Activated B cell treated with CpG ODN at 0.5 μM for 24 hours (primary cell): ENCODE measurements at regions of chrX and their contacts with region 1.

Region 1: GRCh38 chrX:81121513-81122382 is 80.0 kb downstream of the HMGN5 start:
- DNase-seq: peak; percentile 70
- ATAC-seq: peak; percentile 95
- H3K4me3 Mint-ChIP-seq: peak overlapping the region; percentile 93
- H3K27ac Mint-ChIP-seq: peak overlapping the region; percentile 82
- H3K4me1 Mint-ChIP-seq: peaks cover 10% of the 10 kb centered on the region
- H3K27me3 Mint-ChIP-seq: no peaks in the 10 kb centered on the region
- CTCF ChIP-seq: no peak

Region 2: DNA sequence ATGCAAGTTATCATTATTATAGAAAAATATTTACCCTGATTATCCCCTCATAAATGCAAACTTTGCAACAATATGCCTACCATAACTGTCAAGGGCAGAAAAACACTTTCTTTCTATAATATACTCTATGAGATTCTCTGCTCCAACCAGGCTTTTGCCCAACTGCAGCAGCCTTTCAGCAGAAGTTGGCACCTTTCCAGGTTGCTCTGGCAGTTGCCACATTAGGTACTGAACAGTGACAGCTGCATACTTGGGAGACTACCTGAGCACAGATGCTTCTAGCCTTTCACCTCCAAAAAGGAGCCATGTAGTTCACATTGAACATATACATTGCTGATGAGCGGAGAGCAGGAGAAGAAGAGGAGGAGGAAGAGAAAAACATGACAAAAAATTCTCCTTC is 242.6 kb before region 1 on chrX:
- CTCF ChIA-PET with region 1: no interaction called
- POLR2A ChIA-PET with region 1: no interaction called
- intact Hi-C with region 1: no loop called
- DNase-seq: no peak
- ATAC-seq: no peak
- H3K4me3 Mint-ChIP-seq: no peak overlapping the region
- H3K27ac Mint-ChIP-seq: no peak overlapping the region
- H3K4me1 Mint-ChIP-seq: no peaks in the 10 kb centered on the region
- H3K27me3 Mint-ChIP-seq: no peaks in the 10 kb centered on the region
- CTCF ChIP-seq: no peak

Region 3: DNA sequence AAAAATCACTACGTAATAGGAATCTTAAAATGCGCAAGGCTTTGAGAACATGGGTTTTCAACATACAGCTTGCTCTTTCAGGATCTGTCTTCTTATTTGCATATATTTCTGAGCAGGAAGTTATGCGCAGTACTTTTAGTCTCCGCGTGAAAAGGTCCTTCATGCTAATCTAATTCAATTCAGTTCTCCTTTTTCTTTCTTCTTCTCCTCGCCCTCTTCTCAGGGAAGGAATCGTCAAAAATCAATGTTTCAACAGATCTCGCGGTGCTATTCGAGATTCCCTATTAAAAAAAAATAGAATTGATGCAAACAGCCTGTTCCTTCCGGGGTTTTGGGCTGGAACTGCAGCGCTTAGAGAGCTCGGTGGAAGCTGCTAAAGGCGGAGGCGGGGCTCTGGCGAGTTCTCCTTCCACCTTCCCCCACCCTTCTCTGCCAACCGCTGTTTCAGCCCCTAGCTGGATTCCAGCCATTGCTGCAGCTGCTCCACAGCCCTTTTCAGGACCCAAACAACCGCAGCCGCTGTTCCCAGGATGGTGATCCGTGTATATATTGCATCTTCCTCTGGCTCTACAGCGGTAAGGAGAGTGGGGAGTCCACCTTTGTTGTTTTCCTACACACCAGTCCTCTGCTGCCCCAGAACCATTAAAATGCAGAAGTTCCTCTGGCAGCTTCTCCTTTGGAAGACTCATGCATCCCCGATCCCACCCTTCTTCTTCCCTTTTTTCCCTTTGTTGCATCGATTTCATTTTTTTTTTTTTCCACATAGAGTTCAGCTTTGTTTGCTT is 80.1 kb after region 1 on chrX and contains the starts of genes HMGN5 and SH3BGRL:
- CTCF ChIA-PET with region 1: no interaction called
- POLR2A ChIA-PET with region 1: interaction called, 5 read pairs
- intact Hi-C with region 1: loop called (anchors 1 kb)
- DNase-seq: peak; percentile 41
- ATAC-seq: peak; percentile 94
- H3K4me3 Mint-ChIP-seq: peak within 1 kb of the TSS; percentile 95
- H3K27ac Mint-ChIP-seq: peak within 1 kb of the TSS; percentile 92
- H3K4me1 Mint-ChIP-seq: peaks cover 62% of the 10 kb centered on the region
- H3K27me3 Mint-ChIP-seq: no peaks in the 10 kb centered on the region
- CTCF ChIP-seq: no peak
- total RNA-seq, gene HMGN5: 1.0 and 1.2 TPM in 2 replicates
- total RNA-seq, gene SH3BGRL: 116 and 117 TPM in 2 replicates